Sciatic nerve (tissue), 2 donors: ENCODE measurements at regions of chr20 and their contacts with region 1.

Region 1: DNA sequence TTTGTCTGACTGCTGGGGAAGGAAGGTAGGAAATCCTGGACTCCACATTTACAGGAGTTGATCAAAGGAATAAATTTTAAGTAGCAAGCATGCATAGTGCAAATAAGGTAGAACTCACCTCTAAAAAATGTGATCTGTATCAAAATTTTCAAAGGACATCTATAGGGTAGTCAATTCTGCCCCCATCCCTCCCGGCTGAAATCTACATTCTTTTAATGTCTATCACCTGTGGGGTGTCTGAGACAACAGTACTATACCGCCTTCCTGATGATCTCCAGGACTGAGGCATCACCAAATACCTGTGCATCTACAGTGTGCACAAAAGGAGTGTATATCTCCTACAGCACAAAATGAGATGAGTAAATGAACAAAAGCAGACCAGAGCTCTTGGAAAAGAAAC is 19.9 kb downstream of the CPNE1 start:
- DNase-seq: no peak
- ATAC-seq: no peak

Region 2: DNA sequence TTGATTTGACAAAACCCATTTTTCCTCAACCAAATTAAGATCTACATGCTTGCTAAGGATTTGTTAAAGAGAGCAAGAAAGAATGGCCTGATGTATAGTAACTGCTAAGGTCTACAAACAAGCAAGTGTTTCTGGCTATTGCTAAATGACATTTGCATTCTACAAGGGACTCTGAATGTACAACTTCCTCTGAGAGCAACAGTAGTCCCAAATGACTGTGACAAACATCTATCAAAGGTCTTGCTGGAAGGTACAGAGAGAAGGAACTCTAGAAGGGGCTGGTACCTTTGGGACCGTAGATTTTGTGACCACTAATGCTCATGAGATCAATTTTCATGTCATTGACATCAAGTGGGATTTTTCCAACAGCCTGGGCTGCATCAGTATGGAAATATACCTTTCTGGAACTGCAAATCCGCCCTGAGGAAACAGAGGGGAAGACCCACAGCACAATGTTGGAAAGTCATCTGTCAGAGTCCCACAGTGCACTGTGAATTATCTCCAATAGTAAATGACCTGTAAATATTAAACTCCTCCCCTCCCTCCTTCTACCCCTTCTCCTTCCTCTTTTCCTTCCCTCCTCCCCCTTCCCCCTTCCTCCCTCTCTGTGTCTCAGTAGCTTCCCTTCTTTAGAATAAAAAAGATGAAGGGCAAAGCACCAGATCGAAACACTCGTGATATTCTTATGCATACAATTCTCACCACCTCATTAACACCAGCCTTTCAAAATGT is 35.8 kb after region 1 on chr20:
- intact Hi-C with region 1: loop called (anchors 1 kb)
- DNase-seq: no peak
- ATAC-seq: no peak